Psoas muscle (tissue), 8 donors: ENCODE measurements at regions of chr22 and their contacts with region 1.

Region 1: GRCh38 chr22:18077639-18078328 is at the start of gene PEX26:
- DNase-seq: peak; percentile 96
- ATAC-seq: peak; percentile 92 to 95 (median 94)
- H3K4me3 ChIP-seq: peak within 1 kb of the TSS; percentile 92
- H3K27ac ChIP-seq: peak within 1 kb of the TSS; percentile 96
- H3K4me1 ChIP-seq: peaks cover 35% of the 10 kb centered on the region
- H3K27me3 ChIP-seq: no peaks in the 10 kb centered on the region
- CTCF ChIP-seq: no peak
- total RNA-seq, gene PEX26: 17.6 to 23.4 (median 19.8) TPM

Region 2: DNA sequence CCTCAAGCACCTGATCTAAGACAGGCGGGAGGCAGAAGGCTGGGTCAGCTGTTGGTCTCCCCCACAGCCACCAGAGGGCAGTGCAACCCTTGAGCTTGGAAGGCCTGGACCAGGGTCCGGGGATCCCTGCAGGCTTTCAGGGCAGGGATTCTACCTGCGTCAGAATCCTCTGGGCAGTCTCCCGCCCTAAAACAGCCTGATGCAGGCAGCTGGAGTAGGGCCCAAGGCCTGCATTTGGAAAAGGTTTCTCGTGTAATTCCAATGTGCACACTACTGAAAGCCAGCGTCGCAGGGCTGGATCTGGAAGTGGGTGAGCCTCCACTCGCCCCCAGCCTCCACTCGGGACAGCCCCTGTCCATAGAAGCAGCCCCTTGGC is 335.3 kb before region 1 on chr22:
- intact Hi-C with region 1: loop called in 1 of 2 experiments (anchors 5 kb)
- DNase-seq: peak; percentile 56 to 77
- ATAC-seq: peak; percentile 68 to 77 (median 75)
- H3K4me3 ChIP-seq: no peak overlapping the region
- H3K27ac ChIP-seq: no peak overlapping the region
- H3K4me1 ChIP-seq: peaks cover 11% of the 10 kb centered on the region
- H3K27me3 ChIP-seq: no peaks in the 10 kb centered on the region
- CTCF ChIP-seq: peak; percentile 69

Region 3: DNA sequence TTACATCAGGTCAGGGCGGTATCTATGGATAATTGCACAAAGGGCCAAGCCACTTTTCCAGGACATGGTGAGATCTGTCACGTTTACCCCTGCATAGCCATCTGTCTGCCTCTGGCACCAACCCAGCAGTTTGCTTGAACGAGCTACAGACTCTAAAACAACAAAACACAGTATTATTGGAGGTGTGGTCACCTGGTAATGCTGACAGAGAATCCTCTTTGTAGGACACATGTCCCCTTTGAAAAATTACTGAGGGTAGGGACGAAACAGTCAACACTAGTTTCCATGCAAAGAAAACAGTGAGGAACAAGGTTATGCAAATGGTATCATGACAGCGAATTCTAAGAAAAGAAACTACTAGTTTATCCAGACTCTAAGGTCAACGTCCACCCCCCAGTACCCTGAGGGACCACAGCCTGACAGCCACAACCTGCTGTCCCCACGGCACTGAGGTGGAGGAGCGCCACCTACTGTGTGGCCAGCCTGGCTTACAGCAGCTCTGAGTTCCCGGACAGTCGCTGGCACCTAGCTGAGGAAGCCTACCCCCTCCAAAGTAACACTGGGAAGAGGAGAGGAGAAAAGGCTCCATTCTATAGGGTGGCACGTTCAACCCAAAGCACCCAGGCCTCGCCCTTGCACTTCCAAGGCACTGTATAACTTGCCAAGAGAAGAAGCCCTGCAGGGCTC is 186.2 kb before region 1 on chr22:
- intact Hi-C with region 1: loop called (anchors 2 to 5 kb)
- DNase-seq: peak; percentile 54 to 87
- ATAC-seq: peak; percentile 58 to 73 (median 66)
- H3K4me3 ChIP-seq: no peak overlapping the region
- H3K27ac ChIP-seq: peak overlapping the region; percentile 94
- H3K4me1 ChIP-seq: peaks cover 41% of the 10 kb centered on the region
- H3K27me3 ChIP-seq: no peaks in the 10 kb centered on the region
- CTCF ChIP-seq: peak; percentile 72

Region 4: GRCh38 chr22:18001040-18001893 is 76.5 kb before region 1 on chr22:
- intact Hi-C with region 1: loop called (anchors 2 to 5 kb)
- DNase-seq: peak; percentile 90 to 95
- ATAC-seq: peak; percentile 94 to 96 (median 96)
- H3K4me3 ChIP-seq: peak overlapping the region; percentile 94
- H3K27ac ChIP-seq: peak overlapping the region; percentile 95
- H3K4me1 ChIP-seq: peaks cover 11% of the 10 kb centered on the region
- H3K27me3 ChIP-seq: no peaks in the 10 kb centered on the region
- CTCF ChIP-seq: peak; percentile 64

Region 5: GRCh38 chr22:18012531-18012930 is 65.3 kb before region 1 on chr22:
- intact Hi-C with region 1: no loop called
- DNase-seq: no peak
- ATAC-seq: peak in 3 of 4 donors; percentile 54 to 61 (median 57)
- H3K4me3 ChIP-seq: no peak overlapping the region
- H3K27ac ChIP-seq: no peak overlapping the region
- H3K4me1 ChIP-seq: peaks cover 5% of the 10 kb centered on the region
- H3K27me3 ChIP-seq: no peaks in the 10 kb centered on the region
- CTCF ChIP-seq: no peak

Region 6: DNA sequence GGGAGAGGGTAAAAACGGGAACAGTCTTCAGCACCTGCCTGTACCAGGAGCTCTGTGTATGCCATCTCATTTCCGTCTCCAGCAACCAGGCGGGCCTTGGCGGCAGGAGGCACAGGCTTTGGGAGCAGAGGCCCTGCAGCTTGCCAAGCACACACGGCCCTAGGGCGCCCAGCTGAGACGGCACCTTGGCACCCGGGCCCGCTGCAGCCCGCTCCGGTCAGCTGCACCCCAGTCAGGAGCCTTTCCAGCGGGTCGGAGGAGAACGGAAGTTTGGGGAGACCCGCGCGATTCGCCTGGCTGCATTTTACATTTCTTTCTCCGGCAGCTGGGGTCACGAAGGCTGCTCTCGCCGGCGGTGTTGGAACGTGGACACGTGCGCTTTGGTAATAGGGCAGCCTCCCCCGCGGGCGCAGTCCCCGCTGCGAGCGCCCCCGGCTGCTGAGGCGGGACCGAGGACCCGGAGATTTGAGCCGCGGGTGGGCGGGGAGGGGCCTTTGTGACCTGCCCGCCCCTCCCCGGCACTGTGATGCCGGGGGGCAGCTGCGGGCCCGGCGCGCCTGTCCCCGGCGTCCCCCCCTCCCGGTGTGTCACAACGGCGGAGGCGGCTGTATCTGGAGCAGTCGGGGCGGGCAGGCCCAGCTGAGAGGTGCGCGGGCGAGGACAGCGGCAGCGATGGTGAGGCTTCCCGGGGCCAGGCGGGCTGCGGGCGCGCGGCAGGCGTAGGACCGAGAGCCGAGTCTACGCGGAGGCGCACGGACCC is 32.6 kb after region 1 on chr22 and contains the start of gene TUBA8:
- intact Hi-C with region 1: loop called in 1 of 2 experiments (anchors 2 kb)
- DNase-seq: peak; percentile 75 to 89
- ATAC-seq: peak; percentile 71 to 83 (median 78)
- H3K4me3 ChIP-seq: peak within 1 kb of the TSS; percentile 84
- H3K27ac ChIP-seq: peak within 1 kb of the TSS; percentile 92
- H3K4me1 ChIP-seq: peaks cover 43% of the 10 kb centered on the region
- H3K27me3 ChIP-seq: no peaks in the 10 kb centered on the region
- CTCF ChIP-seq: no peak
- total RNA-seq, gene TUBA8: 80.2 to 150 (median 118) TPM